GM10248 (cell line): ENCODE measurements at regions of chr13 and their contacts with region 1.

Region 1: GRCh38 chr13:23656637-23657371 is 86.6 kb downstream of the TNFRSF19 start:
- DNase-seq: peak; percentile 55
- CTCF ChIP-seq: no peak

Region 2: DNA sequence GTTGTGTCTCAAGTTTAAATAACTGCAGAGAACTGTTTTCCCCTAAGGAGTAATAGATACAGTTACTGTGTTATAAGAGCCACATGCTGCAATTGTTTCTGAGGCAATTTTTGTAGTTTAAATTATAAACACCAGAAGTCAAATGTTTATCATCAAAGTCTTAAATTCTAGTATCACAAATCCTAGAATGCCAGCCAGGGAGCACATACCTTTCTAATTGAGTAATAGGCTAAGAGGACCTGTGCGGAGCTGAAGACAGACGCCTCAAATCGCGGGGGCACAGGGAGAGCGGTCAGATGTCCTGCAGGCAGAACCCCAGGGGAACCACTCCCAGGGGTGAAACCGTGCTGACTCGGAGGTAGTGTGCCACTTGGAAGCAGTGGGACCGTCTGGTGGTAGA is 151.8 kb before region 1 on chr13:
- CTCF ChIA-PET with region 1: no interaction called
- POLR2A ChIA-PET with region 1: no interaction called
- DNase-seq: no peak
- CTCF ChIP-seq: no peak

Region 3: GRCh38 chr13:23632048-23632622 is 24.7 kb before region 1 on chr13:
- CTCF ChIA-PET with region 1: interaction called, 11 read pairs
- POLR2A ChIA-PET with region 1: interaction called, 5 read pairs
- DNase-seq: no peak
- CTCF ChIP-seq: no peak

Region 4: GRCh38 chr13:23828866-23829265 is 172.1 kb after region 1 on chr13:
- CTCF ChIA-PET with region 1: no interaction called
- POLR2A ChIA-PET with region 1: no interaction called
- DNase-seq: no peak
- CTCF ChIP-seq: no peak